ENCODE measurements at regions of chr20 and their contacts with region 1.

Region 1: DNA sequence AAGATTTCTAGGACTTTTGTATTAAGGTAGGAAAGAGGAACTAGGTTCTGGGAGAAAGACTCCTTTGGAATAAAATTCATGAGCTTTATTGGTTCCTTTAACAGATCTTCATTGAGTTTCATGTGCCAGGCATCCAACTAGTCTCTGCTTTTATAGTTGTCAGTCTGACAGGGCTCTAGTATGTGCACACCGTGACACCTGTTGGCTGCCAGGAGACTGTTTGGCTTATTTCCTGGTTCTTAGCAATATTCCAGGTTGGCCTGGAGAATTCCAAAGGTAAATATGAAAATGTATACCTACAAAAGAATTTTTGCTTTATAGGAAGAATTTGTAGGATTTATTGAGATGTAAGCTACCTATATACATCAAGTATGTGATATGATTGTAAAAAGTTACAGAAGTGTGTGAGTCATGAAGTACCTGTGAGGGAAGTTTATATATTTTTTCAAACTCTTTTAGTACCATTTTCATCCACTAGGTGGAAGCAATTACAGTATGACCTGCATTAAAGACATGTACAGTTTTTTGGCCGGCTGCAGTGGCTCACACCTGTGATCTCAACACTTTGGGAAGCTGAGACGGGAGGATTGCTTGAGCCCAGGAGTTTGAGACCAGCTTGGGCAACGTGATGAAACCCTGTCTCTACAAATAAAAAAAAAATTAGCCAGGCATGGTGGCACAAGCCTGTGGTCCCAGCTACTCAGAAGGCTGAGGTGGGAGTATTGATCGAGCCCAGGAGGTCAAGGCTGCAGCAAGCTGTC is 35.2 kb downstream of the NDUFAF5 start:
- DNase-seq: peak in 5 of 14 experiments; percentile 7 to 61 (median 43)
- ATAC-seq: peak; percentile 75
- H3K4me3 ChIP-seq: no peak overlapping the region
- H3K4me3 Mint-ChIP-seq: no peak overlapping the region
- H3K27ac ChIP-seq: no peak overlapping the region
- H3K27ac Mint-ChIP-seq: no peak overlapping the region
- H3K4me1 ChIP-seq: no peaks in the 10 kb centered on the region
- H3K4me1 Mint-ChIP-seq: no peaks in the 10 kb centered on the region
- H3K27me3 ChIP-seq: no peaks in the 10 kb centered on the region
- H3K27me3 Mint-ChIP-seq: no peaks in the 10 kb centered on the region
- CTCF ChIP-seq: peak; percentile 84

Region 2: GRCh38 chr20:14051454-14051853 is 231.4 kb after region 1 on chr20:
- CTCF ChIA-PET with region 1: no interaction called
- POLR2A ChIA-PET with region 1: no interaction called
- intact Hi-C with region 1: loop called in 1 of 2 experiments (anchors 5 kb)
- DNase-seq: no peak
- ATAC-seq: no peak
- H3K4me3 ChIP-seq: no peak overlapping the region
- H3K4me3 Mint-ChIP-seq: no peak overlapping the region
- H3K27ac ChIP-seq: no peak overlapping the region
- H3K27ac Mint-ChIP-seq: no peak overlapping the region
- H3K4me1 ChIP-seq: no peaks in the 10 kb centered on the region
- H3K4me1 Mint-ChIP-seq: no peaks in the 10 kb centered on the region
- H3K27me3 ChIP-seq: no peaks in the 10 kb centered on the region
- H3K27me3 Mint-ChIP-seq: no peaks in the 10 kb centered on the region
- CTCF ChIP-seq: no peak

Measured in CD4-positive, alpha-beta T cell (primary cell).